HepG2 (cell line): ENCODE measurements at regions of chr22 and their contacts with region 1.

Region 1: DNA sequence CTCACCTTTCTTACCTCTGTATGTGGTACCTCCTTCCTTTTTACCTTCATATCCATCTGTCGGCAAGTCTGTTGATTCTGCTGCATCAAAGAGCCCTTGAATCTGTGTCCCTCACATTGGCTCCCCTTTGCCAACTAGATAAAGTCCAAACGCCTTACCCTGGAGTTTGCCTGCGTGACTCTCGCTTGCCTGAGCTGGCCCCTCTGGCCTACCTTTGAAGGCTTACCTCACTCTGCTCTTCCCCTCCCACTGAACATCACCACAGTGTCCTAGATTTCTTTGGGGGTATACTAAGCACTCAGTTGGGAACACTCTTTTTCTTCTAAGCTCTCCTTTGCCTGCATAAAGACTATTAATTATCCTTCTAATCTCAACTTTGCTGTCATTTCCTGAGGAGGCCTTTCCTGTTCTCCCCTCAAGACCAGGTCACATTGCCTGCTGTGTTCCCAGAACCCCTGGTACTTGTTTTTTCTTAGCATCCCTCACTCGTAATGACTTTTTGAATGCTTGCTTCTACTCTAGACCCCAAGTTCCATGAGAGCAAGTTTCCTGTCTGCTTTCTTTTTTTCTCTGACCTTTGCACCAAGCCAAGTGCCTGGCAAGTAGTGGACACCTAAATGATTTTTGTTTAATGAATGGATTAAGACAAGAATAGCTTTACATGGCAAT is 67.8 kb upstream of the ADORA2A start:
- DNase-seq: peak; percentile 18
- ATAC-seq: no peak; the same call in 1 of the 3 replicates
- H3K4me3 ChIP-seq: no peak overlapping the region
- H3K27ac ChIP-seq: peak overlapping the region; percentile 19
- H3K4me1 ChIP-seq: peaks cover 37% of the 10 kb centered on the region
- H3K27me3 ChIP-seq: no peaks in the 10 kb centered on the region
- CTCF ChIP-seq: no peak
- EP300 ChIP-seq: no peak
- POLR2A ChIP-seq: no peak
- RAD21 ChIP-seq: no peak

Region 2: GRCh38 chr22:24402460-24403192 is 43.0 kb after region 1 on chr22:
- CTCF ChIA-PET with region 1: no interaction called
- POLR2A ChIA-PET with region 1: no interaction called
- in situ Hi-C with region 1: loop called (anchors 5 kb)
- intact Hi-C with region 1: no loop called
- DNase-seq: peak; percentile 24
- ATAC-seq: 0 out of 3 replicates have a peak, but pooled peaks have one; percentile 32
- H3K4me3 ChIP-seq: no peak overlapping the region
- H3K27ac ChIP-seq: no peak overlapping the region
- H3K4me1 ChIP-seq: peaks cover 10% of the 10 kb centered on the region; the same call in 1 of the 2 replicates
- H3K27me3 ChIP-seq: no peaks in the 10 kb centered on the region
- CTCF ChIP-seq: no peak
- EP300 ChIP-seq: no peak
- POLR2A ChIP-seq: no peak
- RAD21 ChIP-seq: no peak